ENCODE measurements at regions of chr17 and their contacts with region 1.

Region 1: GRCh38 chr17:81871387-81872230 is 472 bp upstream of the ARHGDIA start:
- DNase-seq: peak; percentile 90 to 95 (median 93)
- H3K4me3 ChIP-seq: peak overlapping the region; percentile 59 to 89 (median 62)
- H3K4me3 Mint-ChIP-seq: peak overlapping the region; percentile 79 to 89
- H3K27ac ChIP-seq: peak overlapping the region; percentile 77 to 99
- H3K27ac Mint-ChIP-seq: peak overlapping the region; percentile 87 to 93 (median 89)
- H3K4me1 ChIP-seq: peaks cover 34 to 53% of the 10 kb centered on the region in 2 donors
- H3K4me1 Mint-ChIP-seq: peaks cover 31% of the 10 kb centered on the region
- H3K27me3 ChIP-seq: no peaks in the 10 kb centered on the region
- H3K27me3 Mint-ChIP-seq: no peaks in the 10 kb centered on the region
- CTCF ChIP-seq: peak; percentile 38

Region 2: DNA sequence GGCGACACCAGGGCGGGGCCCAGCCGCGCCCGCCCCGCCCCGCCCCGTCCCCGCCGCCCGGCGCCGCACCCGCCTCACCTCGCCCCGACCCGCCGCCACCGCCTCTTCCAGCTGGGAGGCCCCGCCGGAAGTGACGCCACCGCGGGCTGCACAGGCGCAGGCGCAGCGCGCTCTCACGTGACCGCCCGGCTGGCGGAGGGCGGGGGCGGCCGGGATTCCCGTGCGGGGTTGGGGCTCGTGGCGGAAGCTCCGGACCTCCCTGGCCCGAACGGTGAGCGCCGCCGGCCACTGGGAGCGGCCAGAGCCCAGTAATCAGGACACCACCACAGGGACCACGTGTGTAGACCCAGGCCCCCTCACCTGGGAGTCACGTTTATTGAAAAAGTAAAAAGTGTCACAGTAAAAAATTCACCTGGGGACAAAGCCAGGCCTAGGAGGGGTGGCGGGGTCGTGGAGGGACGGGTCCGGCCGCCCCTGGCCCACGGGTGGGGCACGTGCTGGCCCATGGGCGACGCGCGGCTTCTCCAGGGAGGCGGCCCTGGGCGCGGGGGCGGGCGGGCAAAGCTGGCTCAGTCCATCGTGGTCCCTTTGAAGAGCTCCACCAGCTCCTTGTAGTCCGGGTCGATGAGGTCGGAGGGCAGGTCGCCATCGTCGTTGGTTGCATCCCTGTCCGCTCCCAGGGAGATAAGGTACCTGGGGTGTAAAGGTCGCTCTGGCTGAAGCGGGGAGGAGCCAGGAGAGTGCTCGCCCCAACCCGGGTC is 38.3 kb before region 1 on chr17 and contains the start of gene MCRIP1:
- intact Hi-C with region 1: loop called (anchors 2 to 5 kb)
- DNase-seq: peak; percentile 94 to 97 (median 95)
- H3K4me3 ChIP-seq: peak within 1 kb of the TSS; percentile 76 to 84 (median 83)
- H3K4me3 Mint-ChIP-seq: peak within 1 kb of the TSS; percentile 90 to 92
- H3K27ac ChIP-seq: peak within 1 kb of the TSS; percentile 88 to 96
- H3K27ac Mint-ChIP-seq: peak within 1 kb of the TSS; percentile 91 to 99 (median 96)
- H3K4me1 ChIP-seq: peaks cover 55 to 67% of the 10 kb centered on the region in 2 donors
- H3K4me1 Mint-ChIP-seq: peaks cover 52% of the 10 kb centered on the region
- H3K27me3 ChIP-seq: no peaks in the 10 kb centered on the region
- H3K27me3 Mint-ChIP-seq: peaks cover 0 to 1% (median 0%) of the 10 kb centered on the region in 3 donors
- CTCF ChIP-seq: no peak
- polyA plus RNA-seq, gene MCRIP1: 48.4 to 63.0 (median 48.5) TPM

Region 3: GRCh38 chr17:81844327-81844851 is 27.2 kb before region 1 on chr17:
- intact Hi-C with region 1: no loop called
- DNase-seq: no peak
- H3K4me3 ChIP-seq: no peak overlapping the region
- H3K4me3 Mint-ChIP-seq: no peak overlapping the region
- H3K27ac ChIP-seq: no peak overlapping the region
- H3K27ac Mint-ChIP-seq: peak overlapping the region in 5 of 7 donors; percentile 25 to 66 (median 60)
- H3K4me1 ChIP-seq: peaks cover 12 to 13% of the 10 kb centered on the region in 2 donors
- H3K4me1 Mint-ChIP-seq: peaks cover 18% of the 10 kb centered on the region
- H3K27me3 ChIP-seq: no peaks in the 10 kb centered on the region
- H3K27me3 Mint-ChIP-seq: peaks cover 0 to 3% (median 0%) of the 10 kb centered on the region in 3 donors
- CTCF ChIP-seq: no peak

Region 4: DNA sequence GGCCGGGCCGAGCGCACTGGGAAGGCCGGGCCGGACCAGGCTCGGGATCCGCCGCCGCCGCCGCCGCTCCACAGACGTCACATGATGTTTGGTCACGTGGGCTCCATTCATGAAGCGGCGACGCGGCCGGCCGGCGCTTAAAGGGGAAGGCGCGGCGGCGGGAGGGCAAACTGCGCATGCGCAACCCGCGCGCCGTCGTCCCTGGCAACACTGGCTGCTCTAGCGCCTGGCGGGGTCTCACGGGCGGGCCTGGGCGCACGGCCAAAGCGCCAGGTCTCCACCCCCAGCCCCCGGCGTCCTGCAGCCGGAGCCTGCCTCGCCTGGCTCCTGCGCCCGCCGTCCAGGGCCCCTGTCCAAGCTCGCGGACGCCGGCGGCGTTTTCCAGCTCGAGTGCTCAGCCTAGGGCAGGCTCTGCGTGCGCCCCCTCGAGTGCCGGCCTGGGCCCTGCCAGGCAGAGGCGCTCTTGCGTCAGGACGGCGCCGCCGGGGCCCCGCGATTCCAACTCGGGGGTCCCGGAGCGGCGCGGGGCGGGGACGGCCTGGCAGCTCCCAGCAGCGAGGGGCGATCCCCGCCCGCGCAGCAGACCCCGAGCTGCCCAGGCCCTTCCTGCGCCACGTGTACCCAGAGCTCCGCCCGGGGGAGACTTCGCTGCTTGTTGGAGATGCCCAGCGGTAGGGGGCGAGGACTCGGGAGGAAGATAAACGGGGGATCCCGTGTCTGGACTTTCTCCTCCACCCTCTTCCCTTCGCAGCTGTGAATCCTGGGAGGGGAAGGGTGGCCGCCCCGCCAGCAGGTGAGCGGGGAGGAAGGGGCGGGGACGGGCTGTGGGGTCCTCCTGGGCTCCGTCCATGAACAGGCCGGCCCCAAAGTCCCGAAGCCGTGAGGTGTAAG is 56.3 kb after region 1 on chr17 and contains the start of gene MAFG:
- intact Hi-C with region 1: loop called in 1 of 2 experiments (anchors 5 kb)
- DNase-seq: peak; percentile 89 to 95 (median 95)
- H3K4me3 ChIP-seq: peak within 1 kb of the TSS; percentile 70 to 81 (median 74)
- H3K4me3 Mint-ChIP-seq: peak within 1 kb of the TSS; percentile 91 to 93
- H3K27ac ChIP-seq: peak within 1 kb of the TSS; percentile 95 to 99
- H3K27ac Mint-ChIP-seq: peak within 1 kb of the TSS; percentile 97 to 98 (median 98)
- H3K4me1 ChIP-seq: peaks cover 48 to 54% of the 10 kb centered on the region in 2 donors
- H3K4me1 Mint-ChIP-seq: peaks cover 47% of the 10 kb centered on the region
- H3K27me3 ChIP-seq: peaks cover 9 to 39% of the 10 kb centered on the region in 2 donors
- H3K27me3 Mint-ChIP-seq: peaks cover 31 to 44% (median 32%) of the 10 kb centered on the region in 3 donors
- CTCF ChIP-seq: peak; percentile 33
- polyA plus RNA-seq, gene MAFG: 7.4 to 66.0 (median 7.6) TPM

Region 5: GRCh38 chr17:82095771-82096708 is 224.4 kb after region 1 on chr17:
- intact Hi-C with region 1: no loop called
- DNase-seq: no peak
- H3K4me3 ChIP-seq: no peak overlapping the region
- H3K4me3 Mint-ChIP-seq: no peak overlapping the region
- H3K27ac ChIP-seq: no peak overlapping the region
- H3K27ac Mint-ChIP-seq: no peak overlapping the region
- H3K4me1 ChIP-seq: peaks cover 21 to 37% of the 10 kb centered on the region in 2 donors
- H3K4me1 Mint-ChIP-seq: peaks cover 14% of the 10 kb centered on the region
- H3K27me3 ChIP-seq: no peaks in the 10 kb centered on the region
- H3K27me3 Mint-ChIP-seq: peaks cover 0 to 4% (median 0%) of the 10 kb centered on the region in 3 donors
- CTCF ChIP-seq: no peak